ENCODE measurements at regions of chr5 and their contacts with region 1.

Region 1: DNA sequence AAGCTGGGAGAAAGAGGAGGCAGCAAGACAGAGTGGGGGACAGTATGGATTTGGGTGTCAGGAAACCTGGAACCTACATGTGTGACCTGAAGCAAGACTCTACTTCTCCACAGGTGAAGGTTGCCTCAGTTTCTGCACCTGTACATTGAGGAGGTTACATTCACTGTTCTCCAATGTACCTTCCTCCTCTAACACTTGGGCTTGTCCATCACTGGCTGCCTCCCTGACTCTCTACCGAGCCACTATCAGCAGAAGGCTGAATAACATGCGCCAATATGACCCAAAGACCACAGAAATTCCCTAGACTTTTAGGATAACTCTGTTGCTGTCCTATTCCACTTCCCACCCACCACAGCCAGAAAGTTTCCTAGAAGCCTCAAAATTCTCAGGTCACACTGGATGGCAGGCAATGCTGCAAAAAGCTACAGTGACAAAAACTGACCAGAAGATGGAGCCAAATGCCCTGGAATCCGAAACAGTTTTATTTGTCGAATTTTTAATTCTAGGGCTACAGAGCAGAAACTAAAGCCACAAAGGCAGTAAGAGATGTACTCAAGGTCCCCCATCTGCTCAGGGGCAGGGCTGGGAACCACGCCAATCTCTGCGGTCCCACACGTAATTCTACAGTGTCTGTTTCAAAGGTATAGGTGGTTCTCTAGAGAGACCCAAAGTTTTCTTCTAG is 64.4 kb downstream of the FAM114A2 start:
- DNase-seq: peak in 1 of 2 experiments; percentile 60
- H3K4me3 ChIP-seq: no peak overlapping the region
- H3K27ac ChIP-seq: no peak overlapping the region
- H3K4me1 ChIP-seq: no peaks in the 10 kb centered on the region
- H3K27me3 ChIP-seq: peaks cover 0 to 2% (median 0%) of the 10 kb centered on the region in 4 experiments; a peak in 1 of 7 replicates
- CTCF ChIP-seq: peak in 2 of 3 experiments; percentile 71 to 74; a peak in 3 of 4 replicates
- EP300 ChIP-seq: no peak
- POLR2A ChIP-seq: no peak
- RAD21 ChIP-seq: peak; percentile 93 to 96

Region 2: GRCh38 chr5:153952893-153953292 is 21.4 kb before region 1 on chr5:
- CTCF ChIA-PET with region 1: no interaction called
- POLR2A ChIA-PET with region 1: no interaction called
- DNase-seq: no peak
- H3K4me3 ChIP-seq: no peak overlapping the region
- H3K27ac ChIP-seq: no peak overlapping the region
- H3K4me1 ChIP-seq: no peaks in the 10 kb centered on the region
- H3K27me3 ChIP-seq: no peaks in the 10 kb centered on the region
- CTCF ChIP-seq: no peak
- EP300 ChIP-seq: no peak
- POLR2A ChIP-seq: no peak
- RAD21 ChIP-seq: no peak

Region 3: GRCh38 chr5:153987306-153987705 is 13.0 kb after region 1 on chr5:
- CTCF ChIA-PET with region 1: interaction called, 32 read pairs
- POLR2A ChIA-PET with region 1: no interaction called
- DNase-seq: no peak
- H3K4me3 ChIP-seq: no peak overlapping the region
- H3K27ac ChIP-seq: no peak overlapping the region
- H3K4me1 ChIP-seq: no peaks in the 10 kb centered on the region
- H3K27me3 ChIP-seq: no peaks in the 10 kb centered on the region
- CTCF ChIP-seq: no peak
- EP300 ChIP-seq: no peak
- POLR2A ChIP-seq: no peak
- RAD21 ChIP-seq: no peak

Region 4: GRCh38 chr5:154179846-154180710 is 205.8 kb after region 1 on chr5:
- CTCF ChIA-PET with region 1: interaction called, 28 read pairs
- POLR2A ChIA-PET with region 1: no interaction called
- DNase-seq: no peak
- H3K4me3 ChIP-seq: no peak overlapping the region
- H3K27ac ChIP-seq: no peak overlapping the region
- H3K4me1 ChIP-seq: no peaks in the 10 kb centered on the region; a peak in 1 of 7 replicates
- H3K27me3 ChIP-seq: peaks cover 0 to 3% (median 0%) of the 10 kb centered on the region in 4 experiments; a peak in 1 of 7 replicates
- CTCF ChIP-seq: peak; percentile 26 to 84 (median 84)
- EP300 ChIP-seq: no peak
- POLR2A ChIP-seq: no peak
- RAD21 ChIP-seq: peak; percentile 85 to 90

Region 5: DNA sequence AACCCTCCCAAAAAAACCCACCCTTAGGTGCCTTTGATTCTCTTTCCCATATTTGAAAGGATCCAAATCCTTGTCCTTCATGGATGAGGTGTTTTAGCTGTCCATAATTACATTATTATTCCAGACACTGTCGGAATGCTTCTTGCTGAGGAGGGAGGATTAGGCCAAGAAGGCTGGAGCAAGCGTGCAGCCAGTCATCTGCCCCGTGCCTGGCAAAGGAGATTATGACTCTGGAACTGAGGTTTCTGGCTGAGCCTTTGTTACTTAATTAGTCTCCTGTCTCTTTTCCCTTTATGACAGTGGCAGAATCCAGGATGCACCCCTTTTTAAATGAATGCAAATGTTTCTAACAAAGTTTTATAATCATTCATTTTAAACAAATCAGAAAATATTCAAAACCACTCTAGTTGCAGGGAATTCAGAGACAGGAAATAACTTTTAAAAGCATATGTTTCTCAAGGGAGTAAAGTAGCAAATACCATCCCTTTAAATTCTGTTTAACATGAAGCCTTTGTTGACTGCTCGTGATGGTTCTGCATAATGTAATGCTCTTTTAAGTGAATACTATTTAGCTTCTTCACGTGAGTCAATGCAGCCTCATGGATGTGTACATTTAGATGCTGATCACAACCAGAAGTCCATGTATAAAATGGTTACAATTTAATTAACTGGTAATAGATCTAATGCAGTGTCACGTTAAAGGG is 286.1 kb after region 1 on chr5:
- CTCF ChIA-PET with region 1: no interaction called
- POLR2A ChIA-PET with region 1: no interaction called
- DNase-seq: no peak
- H3K4me3 ChIP-seq: no peak overlapping the region
- H3K27ac ChIP-seq: no peak overlapping the region
- H3K4me1 ChIP-seq: peaks cover 0 to 15% (median 11%) of the 10 kb centered on the region in 4 experiments; a peak in 3 of 7 replicates
- H3K27me3 ChIP-seq: no peaks in the 10 kb centered on the region
- CTCF ChIP-seq: no peak
- EP300 ChIP-seq: no peak
- POLR2A ChIP-seq: no peak
- RAD21 ChIP-seq: no peak